Endothelial cell of umbilical vein (primary cell): ENCODE measurements at regions of chr15 and their contacts with region 1.

Region 1: DNA sequence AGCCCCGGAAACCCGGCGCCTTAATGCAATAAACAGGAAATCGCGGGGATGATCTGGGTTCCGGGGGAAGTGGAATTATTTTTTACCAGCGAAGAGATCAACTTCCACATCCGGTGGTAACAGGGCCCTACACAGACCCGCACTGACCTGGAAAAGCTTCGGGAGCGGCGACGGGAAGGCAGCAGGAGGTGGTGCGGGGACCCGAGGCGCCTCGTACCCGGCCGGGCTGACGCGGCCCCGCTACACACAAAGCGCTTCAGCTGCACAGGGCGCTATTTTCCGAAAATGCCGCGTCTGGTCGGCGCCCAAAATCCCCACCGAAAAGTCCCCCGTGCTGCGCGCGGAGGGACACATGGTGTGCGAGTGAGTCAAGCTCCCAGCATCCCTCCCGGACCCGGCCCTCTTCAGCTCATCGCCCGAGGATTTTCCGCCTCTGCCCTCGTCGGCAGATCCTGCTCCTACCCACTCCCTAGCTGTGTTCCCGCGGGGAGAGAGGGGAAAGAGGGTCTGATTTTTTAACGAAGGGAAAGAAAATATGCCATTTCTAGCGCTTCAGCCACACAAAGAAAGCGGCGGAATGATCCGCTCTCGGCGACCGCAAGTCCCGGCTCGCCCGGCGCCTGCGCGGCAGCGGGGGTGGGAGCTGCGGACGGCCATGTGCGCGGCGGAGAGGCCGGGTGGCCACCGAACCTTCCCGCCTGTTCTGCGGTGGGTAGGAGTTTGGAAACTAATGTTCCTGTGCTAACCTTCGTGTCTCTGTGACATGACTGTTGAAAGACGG is at the start of gene GABPB1:
- DNase-seq: peak; percentile 93
- H3K4me3 ChIP-seq: peak within 1 kb of the TSS; percentile 69 to 97 (median 79)
- H3K27ac ChIP-seq: peak within 1 kb of the TSS; percentile 98
- H3K4me1 ChIP-seq: peaks cover 36% of the 10 kb centered on the region
- H3K27me3 ChIP-seq: no peaks in the 10 kb centered on the region
- CTCF ChIP-seq: no peak
- POLR2A ChIP-seq: peak; percentile 48
- total RNA-seq, gene GABPB1: 57.8 and 59.7 TPM in 2 replicates

Region 2: DNA sequence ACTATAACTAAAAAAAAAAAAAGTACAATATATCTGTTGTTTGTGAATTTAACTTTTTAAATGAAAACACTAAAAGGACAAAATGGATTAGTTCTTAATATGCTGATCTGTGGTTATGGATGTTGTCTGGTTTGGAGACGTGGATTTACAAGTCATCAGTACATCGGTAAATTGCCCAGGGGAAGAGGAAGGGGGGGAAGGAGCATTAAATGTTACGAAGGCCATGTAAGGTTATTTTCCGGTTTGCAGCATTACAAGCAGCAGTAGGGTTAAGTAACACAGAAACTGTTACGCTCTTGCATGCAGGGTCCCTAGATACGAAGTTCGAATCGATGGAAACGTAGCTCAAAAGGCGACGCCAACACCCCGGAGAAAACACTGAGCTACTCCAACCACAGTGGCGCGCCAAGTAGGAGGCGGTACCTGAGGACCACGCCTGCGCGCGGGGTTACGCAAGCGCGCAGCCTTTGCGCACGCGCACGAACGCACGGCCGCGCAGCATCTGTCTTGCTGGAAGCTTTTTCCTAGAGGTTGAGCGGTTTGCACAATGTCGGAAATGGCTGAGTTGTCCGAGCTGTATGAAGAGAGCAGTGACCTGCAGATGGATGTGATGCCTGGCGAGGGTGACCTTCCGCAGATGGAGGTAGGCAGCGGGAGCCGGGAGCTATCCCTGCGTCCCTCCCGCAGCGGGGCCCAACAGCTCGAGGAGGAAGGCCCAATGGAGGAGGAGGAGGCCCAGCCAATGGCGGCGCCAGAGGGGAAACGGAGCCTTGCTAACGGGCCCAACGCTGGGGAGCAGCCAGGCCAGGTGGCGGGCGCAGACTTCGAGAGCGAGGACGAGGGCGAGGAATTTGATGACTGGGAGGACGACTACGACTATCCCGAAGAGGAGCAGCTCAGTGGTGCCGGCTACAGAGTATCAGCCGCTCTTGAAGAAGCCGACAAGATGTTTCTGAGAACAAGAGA is 1477.1 kb before region 1 on chr15 and contains the start of gene EID1:
- CTCF ChIA-PET with region 1: no interaction called
- POLR2A ChIA-PET with region 1: no interaction called
- dilution Hi-C with region 1: no loop called
- intact Hi-C with region 1: loop called (anchors 10 kb)
- DNase-seq: peak; percentile 97
- H3K4me3 ChIP-seq: peak within 1 kb of the TSS; percentile 25 to 86 (median 67)
- H3K27ac ChIP-seq: peak within 1 kb of the TSS; percentile 29
- H3K4me1 ChIP-seq: peaks cover 13% of the 10 kb centered on the region
- H3K27me3 ChIP-seq: peaks cover under 1 to 7% of the 10 kb centered on the region in 2 experiments
- CTCF ChIP-seq: no peak
- POLR2A ChIP-seq: peak; percentile 86
- total RNA-seq, gene EID1: 146 and 153 TPM in 2 replicates

Region 3: DNA sequence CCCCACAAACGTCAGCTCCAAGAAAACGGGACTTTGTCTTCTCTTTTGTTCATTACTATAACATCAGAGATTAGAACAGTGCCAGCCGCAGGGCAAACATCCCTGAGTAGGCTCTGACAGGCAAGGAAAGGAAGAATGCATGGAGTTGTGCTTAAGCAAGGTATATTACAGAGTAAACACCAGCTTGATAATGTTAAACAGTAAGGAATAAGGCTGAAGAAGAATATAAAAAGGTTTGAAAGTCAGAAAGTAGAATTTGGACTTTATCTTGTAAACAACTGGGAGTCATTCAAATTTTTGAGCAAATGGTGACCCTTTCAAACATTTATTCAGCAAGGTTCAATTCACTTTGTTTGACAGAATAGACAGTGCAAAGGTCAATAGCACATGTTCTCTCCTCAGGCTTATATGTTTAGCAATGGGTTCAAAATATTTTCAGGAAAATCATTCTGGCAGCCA is 11.0 kb before region 1 on chr15:
- CTCF ChIA-PET with region 1: interaction called, 4 read pairs
- POLR2A ChIA-PET with region 1: interaction called, 12 read pairs
- dilution Hi-C with region 1: no loop called
- intact Hi-C with region 1: no loop called
- DNase-seq: no peak
- H3K4me3 ChIP-seq: no peak overlapping the region
- H3K27ac ChIP-seq: no peak overlapping the region
- H3K4me1 ChIP-seq: peaks cover 3% of the 10 kb centered on the region
- H3K27me3 ChIP-seq: no peaks in the 10 kb centered on the region
- CTCF ChIP-seq: no peak
- POLR2A ChIP-seq: no peak

Region 4: DNA sequence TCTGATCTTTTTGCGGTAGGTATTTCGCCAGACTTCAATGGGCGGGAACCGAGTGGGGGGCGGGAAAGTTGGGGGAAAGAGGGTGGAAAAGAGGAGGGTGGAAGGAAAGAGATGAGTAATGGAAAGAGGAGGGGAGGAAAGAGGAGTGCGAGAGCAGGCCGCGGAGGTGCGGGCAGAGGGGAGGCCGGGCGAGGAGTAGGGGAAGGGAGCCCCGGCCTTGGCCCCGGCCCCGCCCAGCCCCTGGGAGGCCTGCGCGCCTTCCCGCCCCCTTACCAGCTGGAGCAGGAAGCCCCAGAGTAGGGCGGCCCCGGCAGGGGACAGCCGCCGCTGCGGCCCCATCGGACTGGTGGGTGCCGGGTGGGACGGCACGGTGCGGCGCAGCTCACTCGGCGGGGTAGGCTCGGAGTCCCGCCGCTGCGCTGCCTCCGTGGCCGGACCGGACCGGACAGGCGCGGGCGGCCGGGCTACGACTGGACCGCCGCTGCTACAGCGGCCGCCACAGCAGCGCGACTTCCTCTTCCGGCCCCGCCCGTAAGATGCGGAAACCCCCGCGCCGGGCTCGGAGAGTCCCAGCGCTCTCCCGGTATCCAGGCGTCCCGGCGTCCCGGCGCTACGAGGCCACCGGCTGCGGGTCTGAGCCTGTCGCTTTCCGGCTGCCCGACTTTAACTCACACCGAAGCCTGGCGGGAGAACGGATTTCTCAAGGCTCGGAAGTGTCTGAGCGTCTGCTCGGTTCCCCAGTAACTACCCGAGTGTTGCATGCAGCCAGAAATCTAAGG is 410.4 kb after region 1 on chr15 and contains the start of gene SPPL2A:
- CTCF ChIA-PET with region 1: no interaction called
- POLR2A ChIA-PET with region 1: no interaction called
- dilution Hi-C with region 1: no loop called
- intact Hi-C with region 1: loop called (anchors 10 kb)
- DNase-seq: peak; percentile 77
- H3K4me3 ChIP-seq: peak within 1 kb of the TSS; percentile 77 to 93 (median 84)
- H3K27ac ChIP-seq: peak within 1 kb of the TSS; percentile 71
- H3K4me1 ChIP-seq: peaks cover 12% of the 10 kb centered on the region
- H3K27me3 ChIP-seq: no peaks in the 10 kb centered on the region
- CTCF ChIP-seq: no peak
- POLR2A ChIP-seq: peak; percentile 95
- total RNA-seq, gene SPPL2A: 80.1 and 88.7 TPM in 2 replicates

Region 5: GRCh38 chr15:50908210-50909009 is 553.4 kb after region 1 on chr15 and contains the start of gene AP4E1:
- CTCF ChIA-PET with region 1: no interaction called
- POLR2A ChIA-PET with region 1: no interaction called
- dilution Hi-C with region 1: no loop called
- intact Hi-C with region 1: loop called (anchors 5 kb)
- DNase-seq: peak; percentile 96
- H3K4me3 ChIP-seq: peak within 1 kb of the TSS; percentile 95 to 99 (median 96)
- H3K27ac ChIP-seq: peak within 1 kb of the TSS; percentile 76
- H3K4me1 ChIP-seq: peaks cover 10% of the 10 kb centered on the region
- H3K27me3 ChIP-seq: no peaks in the 10 kb centered on the region
- CTCF ChIP-seq: peak; percentile 87 to 90
- POLR2A ChIP-seq: peak; percentile 14
- total RNA-seq, gene AP4E1: 9.8 and 10.1 TPM in 2 replicates